Stomach (tissue), 19 donors: ENCODE measurements at regions of chr6 and their contacts with region 1.

Region 1: GRCh38 chr6:83514866-83515466 is 2.6 kb downstream of the PRSS35 start:
- DNase-seq: peak in 1 of 2 donors; percentile 84
- H3K4me3 ChIP-seq: no peak overlapping the region
- H3K27ac ChIP-seq: no peak overlapping the region
- H3K4me1 ChIP-seq: peaks cover 6 to 18% (median 14%) of the 10 kb centered on the region in 4 donors
- H3K27me3 ChIP-seq: peaks cover 0 to 9% (median 0%) of the 10 kb centered on the region in 3 donors
- CTCF ChIP-seq: peak in 5 of 7 experiments; percentile 59 to 79 (median 67)
- EP300 ChIP-seq: no peak
- POLR2A ChIP-seq: no peak

Region 2: GRCh38 chr6:83071023-83071422 is 443.9 kb before region 1 on chr6:
- intact Hi-C with region 1: no loop called
- DNase-seq: peak in 1 of 2 donors; percentile 36
- H3K4me3 ChIP-seq: no peak overlapping the region
- H3K27ac ChIP-seq: peak overlapping the region in 3 of 5 donors; percentile 52 to 68 (median 62)
- H3K4me1 ChIP-seq: peaks cover 11 to 51% (median 28%) of the 10 kb centered on the region in 4 donors
- H3K27me3 ChIP-seq: no peaks in the 10 kb centered on the region
- CTCF ChIP-seq: no peak
- EP300 ChIP-seq: no peak
- POLR2A ChIP-seq: no peak

Region 3: GRCh38 chr6:83221889-83222479 is 293.0 kb before region 1 on chr6:
- intact Hi-C with region 1: loop called (anchors 5 kb)
- DNase-seq: peak in 1 of 2 donors; percentile 56
- H3K4me3 ChIP-seq: no peak overlapping the region
- H3K27ac ChIP-seq: no peak overlapping the region
- H3K4me1 ChIP-seq: peaks cover 0 to 8% (median 0%) of the 10 kb centered on the region in 4 donors
- H3K27me3 ChIP-seq: no peaks in the 10 kb centered on the region
- CTCF ChIP-seq: peak in 4 of 7 experiments; percentile 16 to 42 (median 31)
- EP300 ChIP-seq: no peak
- POLR2A ChIP-seq: no peak

Region 4: GRCh38 chr6:83417880-83418663 is 96.9 kb before region 1 on chr6:
- intact Hi-C with region 1: loop called (anchors 5 kb)
- DNase-seq: peak in 1 of 2 donors; percentile 81
- H3K4me3 ChIP-seq: no peak overlapping the region
- H3K27ac ChIP-seq: no peak overlapping the region
- H3K4me1 ChIP-seq: peaks cover 0 to 16% (median 0%) of the 10 kb centered on the region in 4 donors
- H3K27me3 ChIP-seq: no peaks in the 10 kb centered on the region
- CTCF ChIP-seq: peak in 4 of 7 experiments; percentile 46 to 60 (median 52)
- EP300 ChIP-seq: no peak
- POLR2A ChIP-seq: no peak